GM12878 (cell line): ENCODE measurements at regions of chr1 and their contacts with region 1.

Region 1: DNA sequence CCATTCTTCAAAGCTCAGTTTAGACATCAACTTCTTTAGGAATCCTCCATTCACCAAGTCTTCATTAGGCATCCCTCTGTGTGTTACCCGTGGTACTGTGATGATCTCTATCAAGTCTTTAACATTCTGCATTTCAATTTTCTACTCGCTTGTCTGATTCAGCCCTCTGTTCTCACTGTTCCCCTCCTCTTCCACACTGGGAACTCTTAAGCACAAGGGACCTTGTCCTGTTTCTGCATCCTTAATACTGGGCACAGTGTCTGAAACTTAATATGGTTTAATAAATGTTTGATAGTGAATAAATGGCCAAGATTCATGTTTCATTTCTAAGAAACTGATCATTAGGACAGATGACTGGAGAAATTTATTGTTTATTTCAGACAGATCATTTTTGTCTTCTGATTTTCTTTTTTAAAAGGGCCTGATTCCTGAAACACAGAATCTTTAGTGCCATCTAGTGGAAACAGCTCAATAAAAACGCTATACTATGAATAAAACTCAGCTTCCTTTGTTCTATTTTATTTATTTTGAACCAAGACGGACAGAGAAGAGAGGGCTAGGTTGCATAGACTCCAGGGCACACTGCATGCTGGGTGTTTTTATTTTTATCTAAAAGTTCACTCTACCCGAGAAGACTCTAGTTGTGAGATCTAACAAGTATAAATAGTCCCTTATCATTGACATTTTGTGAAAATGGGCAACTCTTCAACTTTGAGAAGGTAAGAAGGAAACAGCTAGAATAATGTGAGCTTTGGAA is 7.0 kb upstream of the TRIM45 start:
- DNase-seq: no peak
- ATAC-seq: peak; percentile 79
- H3K4me3 ChIP-seq: no peak overlapping the region
- H3K27ac ChIP-seq: no peak overlapping the region
- H3K4me1 ChIP-seq: no peaks in the 10 kb centered on the region
- H3K27me3 ChIP-seq: peaks cover 0 to 3% of the 10 kb centered on the region in 2 experiments; a peak in 2 of 4 replicates
- CTCF ChIP-seq: peak in 2 of 3 experiments; percentile 47 to 52; a peak in 3 of 6 replicates
- EP300 ChIP-seq: no peak
- POLR2A ChIP-seq: no peak
- RAD21 ChIP-seq: peak; percentile 66

Region 2: DNA sequence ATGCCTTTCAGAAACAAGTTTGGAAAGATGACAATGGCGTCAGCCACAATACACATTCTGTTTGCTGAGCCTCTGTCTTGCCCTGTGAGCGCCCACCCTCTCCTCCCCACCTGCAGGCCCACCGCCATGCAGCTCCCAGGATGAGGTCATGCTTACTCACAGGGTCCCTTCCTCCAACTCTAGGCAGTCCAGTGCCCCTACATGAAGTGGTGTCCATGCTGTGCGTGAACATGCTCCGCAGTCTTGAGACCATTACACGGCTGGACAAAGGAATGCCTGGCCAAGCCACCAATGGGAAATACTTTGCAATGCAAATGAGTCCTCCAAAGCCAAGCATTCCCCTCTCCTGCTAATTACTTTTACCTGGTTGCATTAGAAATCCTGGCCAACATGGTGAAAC is 649.9 kb before region 1 on chr1:
- CTCF ChIA-PET with region 1: no interaction called
- POLR2A ChIA-PET with region 1: no interaction called
- RAD21 ChIA-PET with region 1: no interaction called
- SMC1A ChIA-PET with region 1: no interaction called
- in situ Hi-C with region 1: no loop called
- intact Hi-C with region 1: no loop called
- DNase-seq: no peak
- ATAC-seq: no peak
- H3K4me3 ChIP-seq: no peak overlapping the region
- H3K27ac ChIP-seq: no peak overlapping the region
- H3K4me1 ChIP-seq: no peaks in the 10 kb centered on the region
- H3K27me3 ChIP-seq: no peaks in the 10 kb centered on the region
- CTCF ChIP-seq: no peak
- EP300 ChIP-seq: no peak
- POLR2A ChIP-seq: no peak
- RAD21 ChIP-seq: no peak

Region 3: GRCh38 chr1:117067533-117068370 is 60.7 kb before region 1 on chr1:
- CTCF ChIA-PET with region 1: interaction called, 167 read pairs
- POLR2A ChIA-PET with region 1: interaction called, 7 read pairs
- RAD21 ChIA-PET with region 1: interaction called, 53 read pairs
- SMC1A ChIA-PET with region 1: interaction called, 49 read pairs
- in situ Hi-C with region 1: no loop called
- intact Hi-C with region 1: loop called (anchors 2 kb)
- DNase-seq: peak; percentile 28
- ATAC-seq: peak; percentile 69
- H3K4me3 ChIP-seq: no peak overlapping the region
- H3K27ac ChIP-seq: 0 out of 2 replicates have a peak overlapping the region, but pooled peaks have one; percentile 29
- H3K4me1 ChIP-seq: peaks cover 12% of the 10 kb centered on the region
- H3K27me3 ChIP-seq: no peaks in the 10 kb centered on the region
- CTCF ChIP-seq: peak; percentile 58 to 77 (median 61)
- EP300 ChIP-seq: no peak
- POLR2A ChIP-seq: no peak
- RAD21 ChIP-seq: peak; percentile 83

Region 4: DNA sequence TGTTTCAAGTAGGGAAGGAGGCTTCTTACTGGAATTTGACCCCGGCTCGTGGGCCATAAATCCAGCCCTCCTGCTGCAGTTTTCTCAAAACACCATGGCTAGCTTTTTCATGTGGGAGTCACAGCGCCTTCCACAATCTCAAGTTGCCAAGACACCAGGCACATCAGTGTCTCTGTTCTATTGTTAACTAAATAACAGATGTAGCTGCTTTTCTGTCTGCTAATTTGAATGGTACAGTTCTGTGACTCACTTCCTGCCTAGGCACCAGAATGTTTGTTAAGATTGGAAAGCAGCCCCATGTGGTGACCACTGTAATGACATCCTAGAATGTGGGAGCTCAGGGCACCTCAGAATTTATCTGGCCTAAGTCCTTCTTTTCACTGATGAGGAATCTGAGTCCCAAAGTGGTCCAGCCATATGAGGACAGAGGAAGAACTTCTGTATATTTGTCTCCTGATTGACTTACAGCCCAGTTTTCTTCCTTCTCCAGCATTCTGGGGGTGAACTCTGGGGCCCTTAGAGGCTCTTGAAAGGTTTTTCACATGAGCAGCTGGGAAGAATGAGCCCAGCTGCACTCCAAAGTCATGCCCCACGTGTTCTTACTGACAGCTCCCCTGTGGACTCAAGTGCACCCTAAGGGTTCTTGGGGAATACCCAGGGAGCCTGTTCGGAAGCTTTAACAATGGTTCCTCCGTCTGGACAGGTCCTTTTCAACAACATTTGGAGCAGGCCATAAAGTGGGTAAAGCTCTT is 34.5 kb before region 1 on chr1:
- CTCF ChIA-PET with region 1: interaction called, 11 read pairs
- POLR2A ChIA-PET with region 1: no interaction called
- RAD21 ChIA-PET with region 1: interaction called, 3 read pairs
- SMC1A ChIA-PET with region 1: interaction called, 5 read pairs
- in situ Hi-C with region 1: no loop called
- intact Hi-C with region 1: no loop called
- DNase-seq: no peak
- ATAC-seq: peak; percentile 91
- H3K4me3 ChIP-seq: no peak overlapping the region
- H3K27ac ChIP-seq: no peak overlapping the region
- H3K4me1 ChIP-seq: no peaks in the 10 kb centered on the region
- H3K27me3 ChIP-seq: no peaks in the 10 kb centered on the region
- CTCF ChIP-seq: peak in 2 of 3 experiments; percentile 13 to 34; a peak in 4 of 6 replicates
- EP300 ChIP-seq: no peak
- POLR2A ChIP-seq: no peak
- RAD21 ChIP-seq: peak; percentile 28

Region 5: GRCh38 chr1:117101334-117101733 is 27.2 kb before region 1 on chr1:
- CTCF ChIA-PET with region 1: interaction called, 17 read pairs
- POLR2A ChIA-PET with region 1: no interaction called
- RAD21 ChIA-PET with region 1: no interaction called
- SMC1A ChIA-PET with region 1: no interaction called
- in situ Hi-C with region 1: no loop called
- intact Hi-C with region 1: no loop called
- DNase-seq: no peak
- ATAC-seq: no peak
- H3K4me3 ChIP-seq: no peak overlapping the region
- H3K27ac ChIP-seq: no peak overlapping the region
- H3K4me1 ChIP-seq: no peaks in the 10 kb centered on the region
- H3K27me3 ChIP-seq: no peaks in the 10 kb centered on the region
- CTCF ChIP-seq: no peak
- EP300 ChIP-seq: no peak
- POLR2A ChIP-seq: no peak
- RAD21 ChIP-seq: no peak

Region 6: DNA sequence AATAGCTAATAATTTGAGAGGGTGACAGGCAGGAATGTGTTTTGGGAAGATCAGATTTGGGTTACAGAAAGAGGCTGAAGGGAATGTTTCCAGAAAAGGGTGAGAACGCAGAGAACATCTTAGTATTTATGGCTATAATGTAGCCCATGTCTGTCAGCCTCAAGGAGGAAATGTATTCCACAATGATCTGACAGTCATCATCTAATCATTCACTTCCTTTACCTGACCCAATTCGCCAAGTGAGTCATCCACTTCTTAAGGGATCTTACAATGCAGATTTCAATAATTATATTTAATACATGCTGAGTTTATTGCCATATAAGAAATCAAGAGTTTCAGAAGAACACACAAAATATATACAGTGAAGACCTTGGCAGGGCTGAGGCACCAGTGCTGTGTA is 17.7 kb before region 1 on chr1:
- CTCF ChIA-PET with region 1: interaction called, 23 read pairs
- POLR2A ChIA-PET with region 1: interaction called, 5 read pairs
- RAD21 ChIA-PET with region 1: no interaction called
- SMC1A ChIA-PET with region 1: interaction called, 6 read pairs
- in situ Hi-C with region 1: no loop called
- intact Hi-C with region 1: no loop called
- DNase-seq: no peak
- ATAC-seq: no peak
- H3K4me3 ChIP-seq: no peak overlapping the region
- H3K27ac ChIP-seq: no peak overlapping the region
- H3K4me1 ChIP-seq: no peaks in the 10 kb centered on the region
- H3K27me3 ChIP-seq: no peaks in the 10 kb centered on the region
- CTCF ChIP-seq: no peak
- EP300 ChIP-seq: no peak
- POLR2A ChIP-seq: no peak
- RAD21 ChIP-seq: no peak

Region 7: DNA sequence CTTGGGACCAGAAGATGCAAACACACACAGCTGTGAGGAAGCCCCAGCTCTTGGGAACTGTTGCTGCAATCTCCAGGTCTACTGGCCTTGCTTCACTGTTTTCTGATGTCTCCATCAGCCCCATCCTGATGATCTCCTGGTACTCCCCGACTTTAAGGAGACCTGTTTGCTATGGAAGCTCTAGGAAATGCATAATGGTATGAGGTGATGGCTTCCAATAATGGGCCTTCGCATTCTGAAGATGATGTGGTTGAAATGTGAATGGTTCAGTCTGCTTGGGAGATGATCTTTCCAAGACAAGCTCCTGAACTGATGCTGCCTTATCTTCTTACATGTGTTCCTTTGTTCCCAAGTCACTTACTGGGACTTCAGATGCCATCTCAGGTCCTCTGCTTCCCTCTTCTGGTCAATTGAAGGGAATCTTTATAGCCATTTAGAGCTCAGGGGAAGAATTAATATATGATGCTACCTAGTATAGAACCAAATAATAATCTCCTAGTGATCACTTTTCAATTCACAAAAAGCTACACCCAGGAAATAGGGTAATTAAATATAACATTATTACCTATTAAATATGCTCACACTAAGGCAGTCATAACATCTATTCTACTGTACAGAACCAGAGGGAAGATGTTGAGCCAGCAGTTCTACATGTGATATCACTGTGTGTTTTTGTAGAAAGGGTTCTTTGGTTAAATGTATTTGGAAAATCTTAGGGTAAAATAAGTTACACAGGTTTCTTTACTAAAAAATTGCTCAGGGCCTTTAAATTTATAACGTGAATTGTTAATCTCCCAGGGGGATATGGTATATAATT is 156.1 kb after region 1 on chr1:
- CTCF ChIA-PET with region 1: interaction called, 10 read pairs
- POLR2A ChIA-PET with region 1: no interaction called
- RAD21 ChIA-PET with region 1: interaction called, 5 read pairs
- SMC1A ChIA-PET with region 1: no interaction called
- in situ Hi-C with region 1: no loop called
- intact Hi-C with region 1: loop called (anchors 5 kb)
- DNase-seq: no peak
- ATAC-seq: peak; percentile 56
- H3K4me3 ChIP-seq: no peak overlapping the region
- H3K27ac ChIP-seq: no peak overlapping the region
- H3K4me1 ChIP-seq: no peaks in the 10 kb centered on the region
- H3K27me3 ChIP-seq: no peaks in the 10 kb centered on the region; a peak in 1 of 4 replicates
- CTCF ChIP-seq: peak; percentile 14 to 45 (median 24); a peak in 3 of 6 replicates
- EP300 ChIP-seq: no peak
- POLR2A ChIP-seq: no peak
- RAD21 ChIP-seq: peak; percentile 56